ENCODE measurements at regions of chr3 and their contacts with region 1.

Region 1: GRCh38 chr3:113754494-113755159 is 7.8 kb downstream of the ATP6V1A start:
- DNase-seq: peak in 1 of 9 experiments; percentile 19
- ATAC-seq: no peak
- H3K4me3 ChIP-seq: no peak overlapping the region
- H3K4me3 Mint-ChIP-seq: no peak overlapping the region
- H3K27ac ChIP-seq: no peak overlapping the region
- H3K27ac Mint-ChIP-seq: no peak overlapping the region
- H3K4me1 ChIP-seq: no peaks in the 10 kb centered on the region
- H3K4me1 Mint-ChIP-seq: peaks cover 16% of the 10 kb centered on the region
- H3K27me3 ChIP-seq: no peaks in the 10 kb centered on the region
- H3K27me3 Mint-ChIP-seq: no peaks in the 10 kb centered on the region
- CTCF ChIP-seq: no peak

Region 2: DNA sequence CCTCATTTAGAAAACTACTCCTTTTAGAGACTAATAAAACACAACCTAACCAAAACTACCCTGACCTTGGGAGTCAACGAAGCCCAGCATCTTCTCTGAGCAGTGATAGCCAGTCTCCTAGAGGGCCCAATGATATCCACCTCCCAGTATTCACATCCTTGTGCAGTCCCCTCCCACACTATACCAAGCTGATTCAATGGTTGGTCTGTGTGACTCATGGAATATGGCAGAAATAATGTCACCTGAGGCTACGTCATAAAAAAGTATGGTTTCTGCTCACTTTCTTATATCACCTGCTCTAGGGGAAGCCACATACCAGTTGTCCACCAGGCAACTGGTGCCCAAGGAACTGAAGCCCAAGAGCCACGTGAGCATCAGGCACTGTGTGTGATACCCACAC is 36.8 kb before region 1 on chr3:
- CTCF ChIA-PET with region 1: no interaction called
- POLR2A ChIA-PET with region 1: no interaction called
- intact Hi-C with region 1: no loop called
- DNase-seq: no peak
- ATAC-seq: no peak
- H3K4me3 ChIP-seq: no peak overlapping the region
- H3K4me3 Mint-ChIP-seq: no peak overlapping the region
- H3K27ac ChIP-seq: no peak overlapping the region
- H3K27ac Mint-ChIP-seq: no peak overlapping the region
- H3K4me1 ChIP-seq: no peaks in the 10 kb centered on the region
- H3K4me1 Mint-ChIP-seq: peaks cover 4% of the 10 kb centered on the region
- H3K27me3 ChIP-seq: no peaks in the 10 kb centered on the region
- H3K27me3 Mint-ChIP-seq: no peaks in the 10 kb centered on the region
- CTCF ChIP-seq: no peak

Region 3: GRCh38 chr3:113795693-113796092 is 41.1 kb after region 1 on chr3:
- CTCF ChIA-PET with region 1: no interaction called
- POLR2A ChIA-PET with region 1: no interaction called
- intact Hi-C with region 1: loop called in 1 of 2 experiments (anchors 5 kb)
- DNase-seq: peak in 1 of 9 experiments; percentile 12
- ATAC-seq: no peak
- H3K4me3 ChIP-seq: no peak overlapping the region
- H3K4me3 Mint-ChIP-seq: no peak overlapping the region
- H3K27ac ChIP-seq: no peak overlapping the region
- H3K27ac Mint-ChIP-seq: no peak overlapping the region
- H3K4me1 ChIP-seq: no peaks in the 10 kb centered on the region
- H3K4me1 Mint-ChIP-seq: no peaks in the 10 kb centered on the region
- H3K27me3 ChIP-seq: no peaks in the 10 kb centered on the region
- H3K27me3 Mint-ChIP-seq: no peaks in the 10 kb centered on the region
- CTCF ChIP-seq: no peak